Endothelial cell of umbilical vein (primary cell): ENCODE measurements at regions of chr11 and their contacts with region 1.

Region 1: DNA sequence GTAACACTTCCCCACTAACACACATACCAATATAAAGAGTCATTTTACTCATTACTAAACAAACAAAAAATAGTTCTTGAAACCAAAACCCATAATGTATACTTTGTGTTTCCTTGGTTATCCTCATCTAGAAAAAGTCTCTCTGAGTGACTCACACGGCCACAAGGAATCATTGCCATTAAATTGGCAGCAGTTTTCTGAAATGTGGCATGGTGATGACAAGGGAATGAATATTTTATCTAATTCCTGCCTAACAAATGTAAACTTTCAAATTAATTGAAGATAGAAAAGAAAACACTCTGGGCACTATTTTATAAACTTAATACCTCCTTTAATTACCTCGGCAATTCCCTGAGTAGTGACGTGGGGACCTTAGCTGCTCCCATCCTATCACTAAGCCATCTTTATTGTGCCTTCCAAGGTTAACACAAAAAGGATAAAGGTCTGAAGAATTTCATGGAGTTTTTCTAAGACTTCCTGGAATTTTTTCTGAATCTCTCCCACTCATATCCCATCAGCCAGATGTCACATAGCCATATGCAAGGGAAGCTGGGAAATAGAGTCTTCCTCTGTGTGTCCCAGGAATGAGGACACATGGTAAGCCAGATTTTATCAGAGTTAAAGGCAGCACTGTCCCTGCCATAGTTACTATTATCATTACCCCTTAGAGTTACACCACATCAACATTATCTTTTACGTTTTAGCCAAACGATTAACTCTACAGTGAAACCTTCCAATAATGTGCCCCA is 857.2 kb upstream of the TENM4 start:
- DNase-seq: peak; percentile 43
- H3K4me3 ChIP-seq: no peak overlapping the region
- H3K27ac ChIP-seq: peak overlapping the region; percentile 58
- H3K4me1 ChIP-seq: peaks cover 6% of the 10 kb centered on the region
- H3K27me3 ChIP-seq: no peaks in the 10 kb centered on the region
- CTCF ChIP-seq: no peak
- POLR2A ChIP-seq: no peak

Region 2: GRCh38 chr11:80315200-80315599 is 17.1 kb after region 1 on chr11:
- CTCF ChIA-PET with region 1: no interaction called
- POLR2A ChIA-PET with region 1: no interaction called
- dilution Hi-C with region 1: no loop called
- intact Hi-C with region 1: no loop called
- DNase-seq: no peak
- H3K4me3 ChIP-seq: no peak overlapping the region
- H3K27ac ChIP-seq: no peak overlapping the region
- H3K4me1 ChIP-seq: no peaks in the 10 kb centered on the region
- H3K27me3 ChIP-seq: peaks cover 0 to 2% of the 10 kb centered on the region in 2 experiments
- CTCF ChIP-seq: no peak
- POLR2A ChIP-seq: no peak

Region 3: GRCh38 chr11:80330264-80330663 is 32.2 kb after region 1 on chr11:
- CTCF ChIA-PET with region 1: no interaction called
- POLR2A ChIA-PET with region 1: no interaction called
- dilution Hi-C with region 1: no loop called
- intact Hi-C with region 1: no loop called
- DNase-seq: peak; percentile 81
- H3K4me3 ChIP-seq: no peak overlapping the region
- H3K27ac ChIP-seq: no peak overlapping the region
- H3K4me1 ChIP-seq: peaks cover 15% of the 10 kb centered on the region
- H3K27me3 ChIP-seq: no peaks in the 10 kb centered on the region
- CTCF ChIP-seq: no peak
- POLR2A ChIP-seq: no peak

Region 4: GRCh38 chr11:81010631-81011030 is 712.6 kb after region 1 on chr11:
- CTCF ChIA-PET with region 1: no interaction called
- POLR2A ChIA-PET with region 1: no interaction called
- dilution Hi-C with region 1: no loop called
- intact Hi-C with region 1: loop called (anchors 10 kb)
- DNase-seq: no peak
- H3K4me3 ChIP-seq: no peak overlapping the region
- H3K27ac ChIP-seq: no peak overlapping the region
- H3K4me1 ChIP-seq: peaks cover 5% of the 10 kb centered on the region
- H3K27me3 ChIP-seq: no peaks in the 10 kb centered on the region
- CTCF ChIP-seq: no peak
- POLR2A ChIP-seq: no peak